Calu3 (cell line): ENCODE measurements at regions of chr6 and their contacts with region 1.

Region 1: DNA sequence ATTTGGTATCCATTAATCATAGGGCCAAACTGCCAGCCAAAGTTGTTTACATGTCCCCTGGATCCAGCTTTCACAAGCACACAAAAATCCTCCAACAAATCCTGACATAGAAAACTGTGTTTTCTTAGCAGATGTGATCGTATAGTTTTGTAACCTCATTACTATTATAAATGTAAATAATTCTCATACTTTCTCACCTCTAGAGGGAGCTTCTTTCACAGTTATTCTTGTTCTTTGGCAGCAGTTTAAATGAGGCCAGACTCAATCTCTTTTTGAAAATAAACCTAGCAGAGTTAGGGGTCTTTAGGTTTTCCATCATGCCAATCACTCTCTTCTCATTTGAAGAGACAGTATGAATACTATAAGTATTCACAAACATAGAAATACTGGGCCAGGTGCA is 17.0 kb upstream of the ZNF318 start:
- DNase-seq: no peak
- H3K4me3 Mint-ChIP-seq: no peak overlapping the region
- H3K27ac Mint-ChIP-seq: no peak overlapping the region
- H3K4me1 Mint-ChIP-seq: no peaks in the 10 kb centered on the region
- H3K27me3 Mint-ChIP-seq: peaks cover 43% of the 10 kb centered on the region
- CTCF ChIP-seq: no peak

Region 2: GRCh38 chr6:43496370-43497128 is 110.1 kb after region 1 on chr6:
- CTCF ChIA-PET with region 1: interaction called, 10 read pairs
- intact Hi-C with region 1: loop called (anchors 1 kb)
- DNase-seq: peak; percentile 75
- H3K4me3 Mint-ChIP-seq: no peak overlapping the region
- H3K27ac Mint-ChIP-seq: no peak overlapping the region
- H3K4me1 Mint-ChIP-seq: peaks cover 42% of the 10 kb centered on the region
- H3K27me3 Mint-ChIP-seq: no peaks in the 10 kb centered on the region
- CTCF ChIP-seq: peak; percentile 89

Region 3: GRCh38 chr6:43506667-43507471 is 120.4 kb after region 1 on chr6:
- CTCF ChIA-PET with region 1: interaction called, 18 read pairs
- intact Hi-C with region 1: loop called (anchors 1 kb)
- DNase-seq: peak; percentile 92
- H3K4me3 Mint-ChIP-seq: no peak overlapping the region
- H3K27ac Mint-ChIP-seq: no peak overlapping the region
- H3K4me1 Mint-ChIP-seq: peaks cover 16% of the 10 kb centered on the region
- H3K27me3 Mint-ChIP-seq: peaks cover 27% of the 10 kb centered on the region
- CTCF ChIP-seq: peak; percentile 99